Activated CD4-positive, alpha-beta T cell treated with anti-CD3 and anti-CD28 coated beads for 36 hours (primary cell): ENCODE measurements at regions of chr1 and their contacts with region 1.

Region 1: GRCh38 chr1:25642574-25643108 is 26.1 kb downstream of the MAN1C1 start:
- DNase-seq: peak; percentile 85
- ATAC-seq: peak; percentile 90
- H3K4me3 Mint-ChIP-seq: peak overlapping the region; percentile 69
- H3K27ac Mint-ChIP-seq: peak overlapping the region; percentile 85
- H3K4me1 Mint-ChIP-seq: peaks cover 80% of the 10 kb centered on the region
- H3K27me3 Mint-ChIP-seq: no peaks in the 10 kb centered on the region

Region 2: GRCh38 chr1:25631750-25632485 is 10.7 kb before region 1 on chr1:
- CTCF ChIA-PET with region 1: interaction called, 15 read pairs
- POLR2A ChIA-PET with region 1: interaction called, 4 read pairs
- intact Hi-C with region 1: loop called in 1 of 2 experiments (anchors 1 kb)
- DNase-seq: no peak
- ATAC-seq: peak; percentile 18
- H3K4me3 Mint-ChIP-seq: peak overlapping the region; percentile 73
- H3K27ac Mint-ChIP-seq: peak overlapping the region; percentile 83
- H3K4me1 Mint-ChIP-seq: peaks cover 70% of the 10 kb centered on the region
- H3K27me3 Mint-ChIP-seq: no peaks in the 10 kb centered on the region

Region 3: DNA sequence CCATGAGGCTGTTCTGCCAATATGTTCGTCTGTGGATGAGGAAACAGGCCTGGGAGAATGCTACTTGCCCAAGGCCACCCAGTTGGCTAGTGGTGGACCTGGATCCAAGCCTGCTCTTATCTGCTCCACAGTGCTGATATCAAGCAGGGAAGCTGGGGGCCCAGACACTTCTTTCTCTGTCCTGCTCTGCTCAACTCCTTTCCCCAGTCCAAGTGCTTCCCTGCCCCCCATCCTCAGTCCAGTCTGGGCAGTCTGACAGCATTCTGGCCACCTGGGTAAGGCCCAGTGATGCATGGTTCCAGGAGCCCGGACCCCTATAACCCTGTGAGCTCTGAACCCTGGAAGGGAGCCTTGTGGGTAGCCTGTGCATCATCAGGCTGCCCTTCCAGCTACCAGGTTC is 237.0 kb after region 1 on chr1:
- CTCF ChIA-PET with region 1: no interaction called
- POLR2A ChIA-PET with region 1: no interaction called
- intact Hi-C with region 1: no loop called
- DNase-seq: no peak
- ATAC-seq: no peak
- H3K4me3 Mint-ChIP-seq: no peak overlapping the region
- H3K27ac Mint-ChIP-seq: no peak overlapping the region
- H3K4me1 Mint-ChIP-seq: peaks cover 5% of the 10 kb centered on the region
- H3K27me3 Mint-ChIP-seq: peaks cover 2% of the 10 kb centered on the region